Activated CD4-positive, alpha-beta T cell treated with anti-CD3 and anti-CD28 coated beads, Interleukin-2, amount 10 ng/mL, durations not matched to agents 24 days and 14 days (primary cell): ENCODE measurements at regions of chr1 and their contacts with region 1.

Region 1: DNA sequence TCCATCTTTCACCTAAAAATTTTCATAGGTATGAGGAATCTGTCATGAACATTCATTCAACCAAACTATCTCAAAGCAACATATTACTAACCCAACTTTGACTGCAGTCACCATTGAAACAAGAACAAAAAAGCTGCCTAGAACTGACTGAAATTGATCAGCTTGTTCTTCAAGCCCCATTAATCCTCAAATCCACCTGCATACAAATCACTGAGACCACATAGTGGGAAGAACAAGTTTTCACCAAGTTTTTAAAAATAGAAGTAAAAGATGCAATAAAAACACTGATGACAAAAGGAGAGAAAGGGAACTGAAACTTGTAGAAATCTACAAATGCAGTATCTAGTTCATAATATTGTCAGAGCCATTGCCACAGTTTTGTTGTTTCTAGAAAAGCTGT is 6.1 kb downstream of the SORT1 start:
- DNase-seq: no peak
- H3K4me3 Mint-ChIP-seq: no peak overlapping the region
- H3K27ac Mint-ChIP-seq: no peak overlapping the region
- H3K4me1 Mint-ChIP-seq: peaks cover 17% of the 10 kb centered on the region
- H3K27me3 Mint-ChIP-seq: peaks cover 59% of the 10 kb centered on the region

Region 2: GRCh38 chr1:108624055-108624454 is 767.6 kb before region 1 on chr1:
- intact Hi-C with region 1: no loop called
- DNase-seq: no peak
- H3K4me3 Mint-ChIP-seq: no peak overlapping the region
- H3K27ac Mint-ChIP-seq: no peak overlapping the region
- H3K4me1 Mint-ChIP-seq: no peaks in the 10 kb centered on the region
- H3K27me3 Mint-ChIP-seq: no peaks in the 10 kb centered on the region

Region 3: GRCh38 chr1:109298666-109299557 is 92.7 kb before region 1 on chr1:
- intact Hi-C with region 1: no loop called
- DNase-seq: no peak
- H3K4me3 Mint-ChIP-seq: no peak overlapping the region
- H3K27ac Mint-ChIP-seq: no peak overlapping the region
- H3K4me1 Mint-ChIP-seq: peaks cover 6% of the 10 kb centered on the region
- H3K27me3 Mint-ChIP-seq: peaks cover 9% of the 10 kb centered on the region

Region 4: GRCh38 chr1:109377698-109378097 is 13.9 kb before region 1 on chr1:
- intact Hi-C with region 1: loop called (anchors 2 kb)
- DNase-seq: no peak
- H3K4me3 Mint-ChIP-seq: no peak overlapping the region
- H3K27ac Mint-ChIP-seq: no peak overlapping the region
- H3K4me1 Mint-ChIP-seq: peaks cover 14% of the 10 kb centered on the region
- H3K27me3 Mint-ChIP-seq: peaks cover 4% of the 10 kb centered on the region

Region 5: GRCh38 chr1:109426278-109427170 is 34.9 kb after region 1 on chr1 and contains the start of gene PSMA5:
- intact Hi-C with region 1: no loop called
- DNase-seq: peak; percentile 98
- H3K4me3 Mint-ChIP-seq: peak within 1 kb of the TSS; percentile 94
- H3K27ac Mint-ChIP-seq: peak within 1 kb of the TSS; percentile 97
- H3K4me1 Mint-ChIP-seq: peaks cover 27% of the 10 kb centered on the region
- H3K27me3 Mint-ChIP-seq: peaks cover 2% of the 10 kb centered on the region
- total RNA-seq, gene PSMA5: 262 and 270 TPM in 2 replicates

Region 6: DNA sequence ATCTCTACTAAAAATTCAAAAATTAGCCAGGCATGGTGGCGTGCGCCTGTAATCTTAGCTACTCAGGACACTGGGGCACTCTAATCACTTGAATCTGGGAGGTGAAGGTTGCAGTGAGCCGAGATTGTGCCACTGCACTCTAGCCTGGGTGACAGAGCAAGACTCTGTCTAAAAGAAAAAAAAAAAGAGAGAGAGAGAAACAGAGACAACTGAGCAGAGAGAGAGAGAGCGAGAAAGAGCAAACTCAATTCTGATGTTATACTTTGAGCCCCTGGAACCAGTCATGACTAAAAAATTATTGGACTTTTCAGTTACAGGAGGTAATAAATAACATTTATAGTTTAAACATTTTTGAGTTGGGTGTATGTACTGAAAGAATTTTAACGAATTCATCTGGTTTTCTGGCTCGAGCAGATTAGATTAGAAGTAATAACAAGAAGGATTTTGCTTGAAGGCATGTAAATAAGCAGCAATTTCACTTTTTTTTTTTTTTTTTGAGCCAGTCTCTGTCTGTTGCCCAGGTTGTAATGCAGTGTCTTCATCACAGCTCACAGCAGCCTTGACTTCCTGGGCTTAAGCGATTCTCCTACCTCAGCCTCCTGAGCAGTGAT is 54.6 kb after region 1 on chr1:
- intact Hi-C with region 1: no loop called
- DNase-seq: no peak
- H3K4me3 Mint-ChIP-seq: no peak overlapping the region
- H3K27ac Mint-ChIP-seq: no peak overlapping the region
- H3K4me1 Mint-ChIP-seq: peaks cover 2% of the 10 kb centered on the region
- H3K27me3 Mint-ChIP-seq: peaks cover 35% of the 10 kb centered on the region